CD8-positive, alpha-beta T cell (primary cell): ENCODE measurements at regions of chrX and their contacts with region 1.

Region 1: DNA sequence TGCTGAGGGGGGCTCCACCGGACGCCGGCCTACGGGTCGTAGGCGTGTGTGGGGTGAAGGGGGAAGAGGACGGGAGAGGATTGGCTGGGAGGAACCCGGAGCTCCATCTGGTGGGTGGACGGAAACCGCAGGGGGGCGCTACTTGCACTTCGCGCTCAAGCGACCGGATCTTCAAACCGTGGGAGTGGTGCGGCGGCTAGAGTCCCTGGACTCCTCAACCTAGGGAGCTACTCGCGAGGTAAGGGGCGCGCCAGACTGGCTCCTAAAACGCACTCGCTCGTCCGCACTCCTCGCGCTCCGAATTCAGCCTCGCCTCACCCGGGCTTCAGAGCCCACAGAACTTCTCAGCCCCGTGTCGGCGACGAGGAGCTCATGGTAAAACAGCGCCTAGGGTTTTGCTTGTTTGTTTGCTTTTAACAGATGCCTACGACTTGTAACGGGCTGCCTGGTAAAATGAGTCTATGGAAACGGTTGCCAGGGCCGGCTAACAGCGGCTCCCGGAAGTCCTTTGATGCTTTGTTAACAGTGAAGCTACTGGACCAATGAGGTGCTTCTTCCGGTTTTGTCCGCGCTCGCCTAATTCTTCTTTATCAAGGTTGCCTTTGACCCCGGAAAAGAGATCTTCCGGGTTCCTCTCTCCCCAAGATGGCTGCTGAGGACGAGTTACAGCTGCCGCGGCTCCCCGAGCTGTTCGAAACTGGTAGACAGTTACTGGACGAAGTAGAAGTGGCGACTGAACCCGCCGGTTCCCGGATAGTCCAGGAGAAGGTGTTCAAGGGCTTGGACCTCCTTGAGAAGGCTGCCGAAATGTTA is at the start of gene IGBP1:
- DNase-seq: peak; percentile 48 to 93 (median 76)
- ATAC-seq: peak; percentile 81
- H3K4me3 ChIP-seq: peak within 1 kb of the TSS; percentile 84 to 88
- H3K4me3 Mint-ChIP-seq: peak within 1 kb of the TSS; percentile 99
- H3K27ac ChIP-seq: peak within 1 kb of the TSS; percentile 95 to 96
- H3K27ac Mint-ChIP-seq: peak within 1 kb of the TSS; percentile 98
- H3K4me1 ChIP-seq: peaks cover 21% of the 10 kb centered on the region
- H3K4me1 Mint-ChIP-seq: peaks cover 45% of the 10 kb centered on the region
- H3K27me3 ChIP-seq: no peaks in the 10 kb centered on the region
- H3K27me3 Mint-ChIP-seq: no peaks in the 10 kb centered on the region
- CTCF ChIP-seq: peak; percentile 48
- total RNA-seq, gene IGBP1: 55.7 to 56.6 TPM

Region 2: DNA sequence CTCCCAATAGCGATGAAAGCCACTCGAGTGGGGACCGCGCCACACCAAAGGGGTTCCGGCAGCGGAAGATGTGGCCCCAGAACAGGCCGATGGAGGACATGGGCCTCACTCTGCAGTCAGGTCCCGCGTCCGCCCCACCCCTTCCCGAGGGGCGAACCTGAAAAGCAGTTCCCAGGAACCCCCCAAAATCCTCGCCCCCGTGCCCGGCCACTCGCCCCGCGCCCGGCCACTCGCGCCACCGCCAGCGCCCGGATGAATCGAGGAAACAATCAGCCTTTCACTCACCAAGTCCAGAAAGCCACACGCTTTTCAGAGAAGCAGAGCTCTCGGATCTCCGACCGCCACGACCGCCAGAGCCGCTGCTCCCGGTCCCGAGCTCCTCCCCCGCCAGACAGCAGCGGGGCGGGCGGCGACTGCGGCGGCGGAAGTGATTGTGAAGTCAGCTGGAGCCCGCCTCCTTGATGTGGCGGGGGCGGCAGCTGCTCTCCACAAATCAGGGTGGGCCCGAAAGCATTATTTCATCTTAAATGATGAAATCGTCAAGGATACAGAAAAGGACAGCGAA is 968.3 kb before region 1 on chrX and contains the start of gene PJA1:
- CTCF ChIA-PET with region 1: no interaction called
- POLR2A ChIA-PET with region 1: no interaction called
- intact Hi-C with region 1: loop called in 1 of 2 experiments (anchors 5 kb)
- DNase-seq: peak; percentile 48 to 83 (median 72)
- ATAC-seq: peak; percentile 75
- H3K4me3 ChIP-seq: peak within 1 kb of the TSS; percentile 74
- H3K4me3 Mint-ChIP-seq: peak within 1 kb of the TSS; percentile 92
- H3K27ac ChIP-seq: peak within 1 kb of the TSS; percentile 73 to 74
- H3K27ac Mint-ChIP-seq: peak within 1 kb of the TSS; percentile 93
- H3K4me1 ChIP-seq: peaks cover 30% of the 10 kb centered on the region
- H3K4me1 Mint-ChIP-seq: peaks cover 35% of the 10 kb centered on the region
- H3K27me3 ChIP-seq: no peaks in the 10 kb centered on the region
- H3K27me3 Mint-ChIP-seq: no peaks in the 10 kb centered on the region
- CTCF ChIP-seq: no peak
- total RNA-seq, gene PJA1: 36.5 to 38.7 TPM

Region 3: GRCh38 chrX:70033348-70034051 is 100.0 kb before region 1 on chrX:
- CTCF ChIA-PET with region 1: interaction called, 3 read pairs
- POLR2A ChIA-PET with region 1: no interaction called
- intact Hi-C with region 1: loop called in 1 of 2 experiments (anchors 2 kb)
- DNase-seq: peak in 4 of 9 experiments; percentile 6 to 29 (median 16)
- ATAC-seq: peak; percentile 44
- H3K4me3 ChIP-seq: no peak overlapping the region
- H3K4me3 Mint-ChIP-seq: no peak overlapping the region
- H3K27ac ChIP-seq: no peak overlapping the region
- H3K27ac Mint-ChIP-seq: no peak overlapping the region
- H3K4me1 ChIP-seq: peaks cover 22% of the 10 kb centered on the region
- H3K4me1 Mint-ChIP-seq: peaks cover 7% of the 10 kb centered on the region
- H3K27me3 ChIP-seq: no peaks in the 10 kb centered on the region
- H3K27me3 Mint-ChIP-seq: no peaks in the 10 kb centered on the region
- CTCF ChIP-seq: no peak

Region 4: GRCh38 chrX:70231666-70232065 is 98.2 kb after region 1 on chrX:
- CTCF ChIA-PET with region 1: no interaction called
- POLR2A ChIA-PET with region 1: no interaction called
- intact Hi-C with region 1: no loop called
- DNase-seq: no peak
- ATAC-seq: no peak
- H3K4me3 ChIP-seq: no peak overlapping the region
- H3K4me3 Mint-ChIP-seq: no peak overlapping the region
- H3K27ac ChIP-seq: no peak overlapping the region
- H3K27ac Mint-ChIP-seq: no peak overlapping the region
- H3K4me1 ChIP-seq: no peaks in the 10 kb centered on the region
- H3K4me1 Mint-ChIP-seq: no peaks in the 10 kb centered on the region
- H3K27me3 ChIP-seq: no peaks in the 10 kb centered on the region
- H3K27me3 Mint-ChIP-seq: no peaks in the 10 kb centered on the region
- CTCF ChIP-seq: no peak

Region 5: DNA sequence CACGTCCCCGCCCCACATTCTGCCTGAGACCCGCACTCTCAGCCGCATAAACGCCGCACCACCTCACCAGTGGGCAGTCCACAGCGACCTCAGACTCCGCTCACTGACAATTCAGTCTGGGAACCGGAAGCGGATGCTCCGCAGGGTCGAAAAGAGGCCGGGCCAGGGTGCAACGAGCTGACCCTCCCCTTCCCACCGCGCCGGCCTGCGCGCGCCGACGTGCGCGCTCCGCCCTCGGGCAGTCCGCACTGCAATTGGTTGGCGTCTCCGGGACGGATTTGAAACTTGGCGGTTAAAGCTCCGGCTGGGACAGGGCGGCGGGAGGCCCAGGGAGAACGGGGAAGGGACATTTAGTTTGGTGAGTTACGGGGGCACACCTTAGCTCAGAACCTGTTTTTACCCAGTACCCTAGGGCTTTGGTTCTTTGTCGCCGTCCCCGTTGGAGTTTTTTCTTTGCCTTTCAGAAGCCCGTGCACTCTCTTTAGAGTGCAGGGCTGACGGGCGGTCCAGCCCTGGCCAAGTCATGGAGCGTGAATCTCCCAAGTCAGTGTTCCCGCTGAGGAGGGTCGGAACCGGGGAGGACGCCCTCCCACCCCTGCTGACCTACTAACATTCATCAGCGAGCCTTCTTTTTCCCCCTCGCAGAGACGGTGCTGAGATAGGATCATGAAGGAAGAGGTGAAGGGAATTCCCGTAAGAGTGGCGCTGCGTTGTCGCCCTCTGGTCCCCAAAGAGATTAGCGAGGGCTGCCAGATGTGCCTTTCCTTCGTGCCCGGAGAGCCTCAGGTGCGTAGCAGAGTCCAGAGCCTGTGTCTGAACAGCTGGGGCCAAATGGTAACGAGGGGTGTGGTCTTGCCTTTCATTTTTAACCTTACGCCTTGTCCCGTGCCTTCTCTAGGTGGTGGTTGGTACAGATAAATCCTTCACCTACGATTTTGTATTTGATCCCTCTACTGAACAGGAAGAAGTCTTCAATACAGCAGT is 156.6 kb after region 1 on chrX and contains the starts of genes KIF4A and PDZD11:
- CTCF ChIA-PET with region 1: no interaction called
- POLR2A ChIA-PET with region 1: no interaction called
- intact Hi-C with region 1: loop called (anchors 1 to 5 kb)
- DNase-seq: peak; percentile 51 to 86 (median 70)
- ATAC-seq: peak; percentile 97
- H3K4me3 ChIP-seq: peak within 1 kb of the TSS; percentile 64 to 69
- H3K4me3 Mint-ChIP-seq: peak within 1 kb of the TSS; percentile 87
- H3K27ac ChIP-seq: peak within 1 kb of the TSS; percentile 61 to 75
- H3K27ac Mint-ChIP-seq: peak within 1 kb of the TSS; percentile 85
- H3K4me1 ChIP-seq: peaks cover 5% of the 10 kb centered on the region
- H3K4me1 Mint-ChIP-seq: peaks cover 21% of the 10 kb centered on the region
- H3K27me3 ChIP-seq: no peaks in the 10 kb centered on the region
- H3K27me3 Mint-ChIP-seq: no peaks in the 10 kb centered on the region
- CTCF ChIP-seq: no peak
- total RNA-seq, gene KIF4A: not detected
- total RNA-seq, gene PDZD11: 3.4 to 5.1 TPM

Region 6: GRCh38 chrX:70398899-70399298 is 265.4 kb after region 1 on chrX:
- CTCF ChIA-PET with region 1: no interaction called
- POLR2A ChIA-PET with region 1: no interaction called
- intact Hi-C with region 1: loop called in 1 of 2 experiments (anchors 2 kb)
- DNase-seq: peak in 3 of 9 experiments; percentile 35 to 82 (median 69)
- ATAC-seq: peak; percentile 93
- H3K4me3 ChIP-seq: no peak overlapping the region
- H3K4me3 Mint-ChIP-seq: peak overlapping the region; percentile 23
- H3K27ac ChIP-seq: peak overlapping the region; percentile 72 to 77
- H3K27ac Mint-ChIP-seq: peak overlapping the region; percentile 98
- H3K4me1 ChIP-seq: peaks cover 6% of the 10 kb centered on the region
- H3K4me1 Mint-ChIP-seq: peaks cover 10% of the 10 kb centered on the region
- H3K27me3 ChIP-seq: no peaks in the 10 kb centered on the region
- H3K27me3 Mint-ChIP-seq: no peaks in the 10 kb centered on the region
- CTCF ChIP-seq: no peak